Right lobe of liver (tissue), 6 donors: ENCODE measurements at regions of chr1 and their contacts with region 1.

Region 1: DNA sequence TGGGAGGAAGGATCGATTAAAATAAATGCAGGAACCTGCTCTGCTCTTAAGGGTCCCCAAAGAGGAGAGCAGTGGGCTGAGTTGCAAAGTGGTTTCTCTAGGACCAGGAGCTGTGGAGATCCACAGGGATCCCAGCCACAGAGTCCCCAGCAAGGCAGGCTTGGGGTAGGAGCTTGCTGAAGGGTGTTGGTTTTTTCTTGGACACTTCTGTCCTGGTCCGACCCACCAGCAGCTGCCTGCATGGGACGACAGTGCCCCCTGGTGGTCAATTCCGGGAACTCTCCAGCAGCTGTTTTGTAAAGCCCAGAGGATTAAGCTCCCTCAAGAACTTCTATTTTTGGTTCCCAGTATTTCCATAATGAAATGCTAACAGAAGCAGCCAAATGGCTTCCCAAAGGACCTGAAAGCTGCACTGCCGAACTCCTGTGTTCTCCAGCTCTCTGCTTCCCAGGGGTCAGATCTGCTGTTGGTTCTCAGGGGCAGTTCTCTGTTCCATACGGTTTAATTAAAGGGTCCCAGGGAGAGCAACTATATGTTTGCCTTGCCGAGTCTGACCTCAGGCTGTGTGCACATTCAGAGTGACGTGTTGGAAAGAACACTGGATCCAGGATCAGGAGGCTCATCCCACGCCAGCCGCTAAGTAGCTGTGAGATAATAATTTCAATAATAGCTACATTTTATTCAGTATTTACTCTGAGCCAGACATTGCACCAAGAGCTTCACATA is 23.2 kb downstream of the NENF start:
- DNase-seq: peak; percentile 80 to 85 (median 85)
- ATAC-seq: peak; percentile 84 to 94 (median 89)
- H3K4me3 ChIP-seq: no peak overlapping the region
- H3K27ac ChIP-seq: no peak overlapping the region
- H3K4me1 ChIP-seq: no peaks in the 10 kb centered on the region
- H3K27me3 ChIP-seq: no peaks in the 10 kb centered on the region
- CTCF ChIP-seq: peak; percentile 93 to 100 (median 98)
- POLR2A ChIP-seq: no peak

Region 2: GRCh38 chr1:212055333-212055732 is 400.6 kb before region 1 on chr1:
- intact Hi-C with region 1: loop called (anchors 5 to 10 kb)
- DNase-seq: no peak
- ATAC-seq: no peak
- H3K4me3 ChIP-seq: no peak overlapping the region
- H3K27ac ChIP-seq: no peak overlapping the region
- H3K4me1 ChIP-seq: no peaks in the 10 kb centered on the region
- H3K27me3 ChIP-seq: no peaks in the 10 kb centered on the region
- CTCF ChIP-seq: no peak
- POLR2A ChIP-seq: no peak

Region 3: GRCh38 chr1:212062832-212063438 is 393.0 kb before region 1 on chr1:
- intact Hi-C with region 1: loop called (anchors 5 to 10 kb)
- DNase-seq: no peak
- ATAC-seq: peak; percentile 82 to 88 (median 84)
- H3K4me3 ChIP-seq: no peak overlapping the region
- H3K27ac ChIP-seq: no peak overlapping the region
- H3K4me1 ChIP-seq: no peaks in the 10 kb centered on the region
- H3K27me3 ChIP-seq: no peaks in the 10 kb centered on the region
- CTCF ChIP-seq: peak; percentile 72 to 74 (median 74)
- POLR2A ChIP-seq: no peak

Region 4: DNA sequence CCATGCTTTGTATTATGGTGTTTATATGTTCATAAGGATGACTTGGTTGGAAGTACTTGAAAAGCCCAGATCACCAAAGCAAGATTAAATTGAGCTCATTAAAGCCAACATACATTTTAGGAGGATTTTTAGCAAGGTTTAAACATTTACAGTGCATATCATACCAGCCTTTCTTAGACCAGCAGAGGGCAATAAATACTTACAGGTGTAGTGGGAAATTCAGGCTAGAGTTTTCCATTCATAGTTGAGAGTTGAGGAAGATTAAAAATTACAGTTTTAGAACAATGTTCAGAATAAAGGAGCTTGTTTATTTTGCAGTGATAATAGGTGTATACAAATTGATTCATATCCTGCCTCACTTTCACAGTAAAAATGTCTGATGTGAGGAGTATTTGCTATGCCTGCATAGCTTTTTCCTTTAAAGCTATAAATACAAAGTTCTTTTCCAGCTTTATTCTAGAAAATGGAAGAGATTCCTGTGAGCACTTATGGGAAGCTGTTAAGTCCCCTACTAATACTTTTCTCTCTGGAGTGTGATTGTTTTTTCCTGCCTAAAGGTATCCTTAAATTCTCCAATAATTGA is 385.2 kb before region 1 on chr1:
- intact Hi-C with region 1: loop called (anchors 5 to 10 kb)
- DNase-seq: no peak
- ATAC-seq: peak; percentile 86 to 94 (median 90)
- H3K4me3 ChIP-seq: no peak overlapping the region
- H3K27ac ChIP-seq: no peak overlapping the region
- H3K4me1 ChIP-seq: no peaks in the 10 kb centered on the region
- H3K27me3 ChIP-seq: no peaks in the 10 kb centered on the region
- CTCF ChIP-seq: peak; percentile 72 to 84 (median 77)
- POLR2A ChIP-seq: no peak

Region 5: GRCh38 chr1:212368073-212368484 is 87.9 kb before region 1 on chr1:
- intact Hi-C with region 1: loop called in 1 of 2 experiments (anchors 10 kb)
- DNase-seq: no peak
- ATAC-seq: peak; percentile 93 to 97 (median 96)
- H3K4me3 ChIP-seq: no peak overlapping the region
- H3K27ac ChIP-seq: no peak overlapping the region
- H3K4me1 ChIP-seq: no peaks in the 10 kb centered on the region
- H3K27me3 ChIP-seq: no peaks in the 10 kb centered on the region
- CTCF ChIP-seq: peak; percentile 78 to 88 (median 84)
- POLR2A ChIP-seq: no peak